ENCODE measurements at regions of chr11 and their contacts with region 1.

Region 1: DNA sequence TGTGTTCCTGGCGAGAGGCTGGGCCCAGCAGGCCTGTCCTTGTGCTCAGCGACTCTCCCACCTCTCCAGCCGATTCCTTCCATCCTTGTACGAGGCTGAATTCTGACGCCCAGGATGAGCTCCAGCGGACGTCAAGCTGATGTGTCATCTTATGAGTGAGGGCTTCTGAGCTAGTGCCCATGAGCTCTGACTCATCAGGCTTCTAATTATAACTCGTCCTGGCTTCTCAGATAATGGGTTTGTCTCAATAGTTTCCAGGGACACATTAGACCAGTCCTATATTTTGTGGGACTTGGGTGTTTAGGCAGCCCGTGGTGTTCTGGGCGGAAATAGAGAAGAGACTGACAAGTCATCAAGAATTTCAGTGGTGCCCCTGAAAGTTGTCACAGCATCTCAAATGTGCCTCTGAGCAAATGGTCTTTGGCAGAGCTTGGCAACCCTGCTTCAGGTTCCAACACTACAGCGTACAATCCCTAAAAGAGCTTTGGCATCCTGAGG is 108.2 kb upstream of the CD44 start:
- DNase-seq: peak in 4 of 9 experiments; percentile 30 to 63 (median 42)
- ATAC-seq: peak; percentile 60
- H3K4me3 ChIP-seq: no peak overlapping the region
- H3K4me3 Mint-ChIP-seq: peak overlapping the region; percentile 51
- H3K27ac ChIP-seq: no peak overlapping the region
- H3K27ac Mint-ChIP-seq: peak overlapping the region; percentile 75
- H3K4me1 ChIP-seq: peaks cover 12% of the 10 kb centered on the region
- H3K4me1 Mint-ChIP-seq: peaks cover 27% of the 10 kb centered on the region
- H3K27me3 ChIP-seq: no peaks in the 10 kb centered on the region
- H3K27me3 Mint-ChIP-seq: no peaks in the 10 kb centered on the region
- CTCF ChIP-seq: no peak

Region 2: DNA sequence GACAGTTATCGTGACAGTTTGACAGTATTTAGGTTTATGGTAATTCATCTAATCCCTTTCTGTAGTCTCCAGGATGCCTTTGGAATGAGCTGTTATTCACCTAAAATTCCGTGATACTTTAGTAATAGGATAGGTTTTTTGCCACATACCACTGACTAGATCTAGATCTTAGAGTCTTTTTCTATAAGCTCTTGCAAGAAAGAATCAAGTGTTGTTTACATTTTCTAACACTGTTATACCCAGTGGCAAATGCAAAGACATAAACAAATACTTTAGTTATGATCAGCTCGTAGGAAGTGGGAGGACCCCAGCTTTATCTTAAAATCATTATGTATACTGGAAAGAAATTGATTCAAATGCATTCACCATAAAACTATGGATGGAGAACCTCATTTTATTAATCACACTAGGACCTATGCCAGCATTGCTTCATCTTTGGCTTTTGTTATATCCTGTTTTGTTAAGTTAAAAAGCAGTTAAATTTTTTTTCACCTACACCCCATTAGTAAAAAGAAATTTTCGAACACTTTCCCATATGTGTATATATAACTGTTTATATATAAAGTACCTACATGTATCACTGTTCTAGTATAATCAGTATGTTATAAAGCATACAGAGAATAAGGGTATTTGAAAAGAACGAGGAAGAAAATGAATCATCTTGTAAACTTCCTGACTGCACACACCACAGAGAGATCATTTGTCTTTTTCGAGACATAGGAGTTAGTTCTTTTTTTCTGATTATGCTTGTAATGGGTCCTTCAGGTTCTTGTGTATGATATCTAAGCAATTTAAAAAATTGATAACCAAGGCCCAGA is 53.5 kb before region 1 on chr11:
- CTCF ChIA-PET with region 1: no interaction called
- POLR2A ChIA-PET with region 1: no interaction called
- intact Hi-C with region 1: no loop called
- DNase-seq: no peak
- ATAC-seq: no peak
- H3K4me3 ChIP-seq: no peak overlapping the region
- H3K4me3 Mint-ChIP-seq: no peak overlapping the region
- H3K27ac ChIP-seq: no peak overlapping the region
- H3K27ac Mint-ChIP-seq: no peak overlapping the region
- H3K4me1 ChIP-seq: no peaks in the 10 kb centered on the region
- H3K4me1 Mint-ChIP-seq: peaks cover 16% of the 10 kb centered on the region
- H3K27me3 ChIP-seq: no peaks in the 10 kb centered on the region
- H3K27me3 Mint-ChIP-seq: no peaks in the 10 kb centered on the region
- CTCF ChIP-seq: no peak

Region 3: DNA sequence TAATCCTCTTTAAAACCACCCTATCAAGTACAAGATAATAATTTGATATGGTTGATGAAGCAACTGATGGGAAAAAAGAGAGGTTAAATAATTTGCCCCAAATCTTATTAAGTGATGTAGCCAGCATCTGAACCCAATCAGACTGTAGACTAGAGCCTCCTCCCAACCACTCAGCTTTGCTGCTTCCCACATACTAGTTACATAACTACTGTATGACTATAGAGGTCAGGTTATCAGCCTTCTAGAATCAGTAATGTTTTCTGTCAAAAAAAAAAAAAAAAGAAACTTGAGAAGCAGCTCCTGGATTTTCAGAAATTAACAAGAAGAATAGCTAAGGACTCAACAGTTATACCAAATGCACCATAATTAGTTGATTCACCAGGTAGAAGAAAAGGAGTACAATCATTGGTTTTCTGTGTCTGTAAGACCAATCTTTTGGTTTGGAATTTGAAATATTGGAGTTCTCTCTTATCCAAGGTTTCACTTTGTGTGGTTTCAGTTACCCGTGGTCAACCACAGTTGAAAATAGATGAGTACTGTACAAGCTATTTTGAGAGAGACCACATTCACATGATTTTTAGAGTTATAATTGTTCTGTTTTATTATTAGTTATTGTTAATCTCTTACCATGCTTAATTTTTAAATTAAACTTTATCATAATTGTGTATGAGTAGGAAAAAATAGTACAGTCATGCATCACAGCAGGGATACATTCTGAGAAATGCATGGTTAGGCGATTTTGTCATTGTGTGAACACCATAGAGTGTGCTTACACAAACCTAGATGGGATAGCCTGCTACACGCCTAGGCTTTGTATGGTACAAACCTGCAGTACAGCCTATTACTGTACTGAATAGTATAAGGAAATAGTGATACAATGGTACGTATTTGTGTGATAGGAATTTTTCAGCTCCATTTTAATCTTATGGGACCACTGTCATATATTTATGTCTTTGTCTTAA is 42.2 kb before region 1 on chr11:
- CTCF ChIA-PET with region 1: no interaction called
- POLR2A ChIA-PET with region 1: no interaction called
- intact Hi-C with region 1: no loop called
- DNase-seq: no peak
- ATAC-seq: no peak
- H3K4me3 ChIP-seq: no peak overlapping the region
- H3K4me3 Mint-ChIP-seq: no peak overlapping the region
- H3K27ac ChIP-seq: no peak overlapping the region
- H3K27ac Mint-ChIP-seq: no peak overlapping the region
- H3K4me1 ChIP-seq: no peaks in the 10 kb centered on the region
- H3K4me1 Mint-ChIP-seq: peaks cover 10% of the 10 kb centered on the region
- H3K27me3 ChIP-seq: no peaks in the 10 kb centered on the region
- H3K27me3 Mint-ChIP-seq: no peaks in the 10 kb centered on the region
- CTCF ChIP-seq: no peak

Region 4: DNA sequence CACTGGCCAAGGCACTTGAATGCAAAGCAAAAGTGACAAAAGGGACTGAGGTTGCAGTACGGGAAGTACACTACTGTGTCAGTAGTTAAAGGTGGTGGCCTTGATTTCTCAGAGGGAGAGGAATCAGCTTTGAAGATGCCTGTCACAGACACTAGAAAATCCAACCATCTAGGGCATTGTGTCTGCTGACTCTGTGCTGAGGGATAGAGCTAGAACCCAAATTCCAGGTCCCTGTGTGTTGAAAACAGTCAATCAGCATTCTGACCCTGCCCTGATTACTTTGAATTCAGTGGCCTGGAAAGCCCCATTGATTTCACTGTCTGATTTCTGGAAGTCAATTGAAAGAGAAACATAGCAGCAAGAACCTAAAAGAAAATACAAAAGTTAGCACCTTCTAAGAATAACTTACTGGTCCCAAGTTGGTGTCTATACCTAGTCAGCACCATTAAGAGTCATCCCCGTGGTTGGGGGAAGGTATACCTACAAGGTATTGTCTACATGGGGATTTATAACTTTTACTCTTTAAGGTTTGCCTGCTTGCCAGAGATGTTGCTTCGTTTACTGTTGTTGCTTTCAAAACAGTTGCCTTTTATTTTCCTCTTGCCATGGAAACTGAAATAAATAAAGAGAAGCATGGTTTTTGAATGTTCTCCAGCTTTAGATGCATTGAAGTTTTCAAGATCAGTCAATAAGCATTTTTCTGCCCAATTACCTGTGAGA is 17.1 kb before region 1 on chr11:
- CTCF ChIA-PET with region 1: interaction called, 3 read pairs
- POLR2A ChIA-PET with region 1: interaction called, 4 read pairs
- intact Hi-C with region 1: loop called in 1 of 2 experiments (anchors 2 kb)
- DNase-seq: peak in 5 of 9 experiments; percentile 5 to 76 (median 43)
- ATAC-seq: peak; percentile 74
- H3K4me3 ChIP-seq: no peak overlapping the region
- H3K4me3 Mint-ChIP-seq: peak overlapping the region; percentile 24
- H3K27ac ChIP-seq: peak overlapping the region in 1 of 2 experiments; percentile 25
- H3K27ac Mint-ChIP-seq: peak overlapping the region; percentile 87
- H3K4me1 ChIP-seq: peaks cover 21% of the 10 kb centered on the region
- H3K4me1 Mint-ChIP-seq: peaks cover 24% of the 10 kb centered on the region
- H3K27me3 ChIP-seq: no peaks in the 10 kb centered on the region
- H3K27me3 Mint-ChIP-seq: no peaks in the 10 kb centered on the region
- CTCF ChIP-seq: no peak

Region 5: GRCh38 chr11:35525501-35526175 is 494.9 kb after region 1 on chr11 and contains the start of gene PAMR1:
- CTCF ChIA-PET with region 1: no interaction called
- POLR2A ChIA-PET with region 1: no interaction called
- intact Hi-C with region 1: no loop called
- DNase-seq: peak in 1 of 9 experiments; percentile 1
- ATAC-seq: no peak
- H3K4me3 ChIP-seq: no peak within 1 kb of the TSS
- H3K4me3 Mint-ChIP-seq: no peak within 1 kb of the TSS
- H3K27ac ChIP-seq: no peak within 1 kb of the TSS
- H3K27ac Mint-ChIP-seq: no peak within 1 kb of the TSS
- H3K4me1 ChIP-seq: no peaks in the 10 kb centered on the region
- H3K4me1 Mint-ChIP-seq: no peaks in the 10 kb centered on the region
- H3K27me3 ChIP-seq: peaks cover 0 to 4% of the 10 kb centered on the region in 2 experiments
- H3K27me3 Mint-ChIP-seq: peaks cover 69% of the 10 kb centered on the region
- CTCF ChIP-seq: no peak
- total RNA-seq, gene PAMR1: not detected